CD8-positive, alpha-beta memory T cell (primary cell): ENCODE measurements at regions of chr19 and their contacts with region 1.

Region 1: DNA sequence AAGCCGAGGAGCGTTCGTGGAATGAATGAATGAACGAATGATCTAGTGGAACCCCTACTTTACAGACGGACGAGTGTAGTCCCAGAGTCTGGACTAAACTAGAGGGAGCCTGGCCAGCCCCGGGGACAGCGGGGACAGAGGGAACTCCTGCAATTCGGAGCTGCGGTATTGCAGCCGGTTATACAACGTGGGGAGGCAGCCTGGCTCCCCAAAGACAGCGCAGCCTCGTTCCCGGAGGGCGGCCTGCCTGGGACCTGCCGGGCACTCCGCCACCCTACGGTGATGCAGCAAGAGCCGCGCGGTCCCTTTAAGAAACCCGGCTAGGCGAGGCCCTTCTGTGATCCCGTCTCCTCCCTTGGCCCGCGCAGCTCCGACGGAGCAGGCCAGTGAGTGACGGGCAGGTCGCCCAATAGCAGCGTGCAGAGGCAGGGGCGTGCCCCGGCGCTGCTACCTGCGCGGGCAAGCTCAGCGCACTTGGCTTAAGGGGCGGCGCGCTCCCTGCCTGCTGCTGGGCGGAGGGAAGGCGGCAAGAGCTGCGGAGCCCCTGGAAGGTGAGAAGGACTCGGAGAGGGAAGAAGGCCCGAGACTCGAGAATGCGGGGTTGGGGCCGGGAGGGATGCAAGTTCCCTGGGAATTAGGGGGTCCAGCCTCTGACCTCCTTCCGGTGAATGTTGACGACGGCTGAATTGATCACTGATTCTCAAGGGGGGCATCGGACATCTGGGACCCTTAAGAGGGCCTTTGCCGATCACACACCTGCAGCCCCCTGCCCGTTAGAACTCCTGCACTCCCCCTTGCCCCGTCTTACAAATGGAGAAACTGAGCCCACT is at the start of gene ABCA7:
- DNase-seq: peak; percentile 98 to 100 (median 99)
- H3K4me3 ChIP-seq: peak within 1 kb of the TSS; percentile 78
- H3K4me3 Mint-ChIP-seq: peak within 1 kb of the TSS; percentile 94 to 100 (median 99)
- H3K27ac ChIP-seq: peak within 1 kb of the TSS; percentile 72
- H3K27ac Mint-ChIP-seq: peak within 1 kb of the TSS; percentile 86 to 97 (median 92)
- H3K4me1 ChIP-seq: peaks cover 49% of the 10 kb centered on the region
- H3K4me1 Mint-ChIP-seq: peaks cover 41 to 61% (median 46%) of the 10 kb centered on the region in 3 donors
- H3K27me3 ChIP-seq: no peaks in the 10 kb centered on the region
- H3K27me3 Mint-ChIP-seq: peaks cover 0 to 1% of the 10 kb centered on the region in 2 donors
- total RNA-seq, gene ABCA7: 33.8 to 39.5 TPM

Region 2: GRCh38 chr19:1001538-1002166 is 38.2 kb before region 1 on chr19:
- CTCF ChIA-PET with region 1: no interaction called
- POLR2A ChIA-PET with region 1: no interaction called
- DNase-seq: peak; percentile 56 to 77 (median 65)
- H3K4me3 ChIP-seq: no peak overlapping the region
- H3K4me3 Mint-ChIP-seq: peak overlapping the region in 1 of 7 donors; percentile 59
- H3K27ac ChIP-seq: no peak overlapping the region
- H3K27ac Mint-ChIP-seq: peak overlapping the region in 2 of 8 donors; percentile 29 to 74
- H3K4me1 ChIP-seq: peaks cover 21% of the 10 kb centered on the region
- H3K4me1 Mint-ChIP-seq: peaks cover 1 to 25% (median 9%) of the 10 kb centered on the region in 3 donors
- H3K27me3 ChIP-seq: peaks cover 25% of the 10 kb centered on the region
- H3K27me3 Mint-ChIP-seq: peaks cover 10 to 28% of the 10 kb centered on the region in 2 donors

Region 3: GRCh38 chr19:1020868-1021425 is 18.9 kb before region 1 on chr19 and contains the start of gene TMEM259:
- CTCF ChIA-PET with region 1: interaction called, 10 read pairs
- POLR2A ChIA-PET with region 1: interaction called, 134 read pairs
- DNase-seq: peak; percentile 96 to 99 (median 98)
- H3K4me3 ChIP-seq: peak within 1 kb of the TSS; percentile 71
- H3K4me3 Mint-ChIP-seq: peak within 1 kb of the TSS; percentile 76 to 95 (median 89)
- H3K27ac ChIP-seq: peak within 1 kb of the TSS; percentile 97
- H3K27ac Mint-ChIP-seq: peak within 1 kb of the TSS; percentile 98 to 100 (median 99)
- H3K4me1 ChIP-seq: peaks cover 59% of the 10 kb centered on the region
- H3K4me1 Mint-ChIP-seq: peaks cover 24 to 60% (median 44%) of the 10 kb centered on the region in 3 donors
- H3K27me3 ChIP-seq: no peaks in the 10 kb centered on the region
- H3K27me3 Mint-ChIP-seq: peaks cover 0 to 6% of the 10 kb centered on the region in 2 donors
- total RNA-seq, gene TMEM259: 151 to 157 TPM

Region 4: GRCh38 chr19:1026189-1027019 is 13.5 kb before region 1 on chr19 and contains the start of gene CNN2:
- CTCF ChIA-PET with region 1: interaction called, 30 read pairs
- POLR2A ChIA-PET with region 1: interaction called, 134 read pairs
- DNase-seq: peak; percentile 58 to 71 (median 68)
- H3K4me3 ChIP-seq: peak within 1 kb of the TSS; percentile 92
- H3K4me3 Mint-ChIP-seq: peak within 1 kb of the TSS; percentile 95 to 99 (median 98)
- H3K27ac ChIP-seq: peak within 1 kb of the TSS; percentile 89
- H3K27ac Mint-ChIP-seq: peak within 1 kb of the TSS; percentile 82 to 99 (median 96)
- H3K4me1 ChIP-seq: peaks cover 38% of the 10 kb centered on the region
- H3K4me1 Mint-ChIP-seq: peaks cover 26 to 45% (median 32%) of the 10 kb centered on the region in 3 donors
- H3K27me3 ChIP-seq: no peaks in the 10 kb centered on the region
- H3K27me3 Mint-ChIP-seq: peaks cover 0 to 6% of the 10 kb centered on the region in 2 donors
- total RNA-seq, gene CNN2: 78.1 to 78.9 TPM